ENCODE measurements at regions of chr11 and their contacts with region 1.

Region 1: DNA sequence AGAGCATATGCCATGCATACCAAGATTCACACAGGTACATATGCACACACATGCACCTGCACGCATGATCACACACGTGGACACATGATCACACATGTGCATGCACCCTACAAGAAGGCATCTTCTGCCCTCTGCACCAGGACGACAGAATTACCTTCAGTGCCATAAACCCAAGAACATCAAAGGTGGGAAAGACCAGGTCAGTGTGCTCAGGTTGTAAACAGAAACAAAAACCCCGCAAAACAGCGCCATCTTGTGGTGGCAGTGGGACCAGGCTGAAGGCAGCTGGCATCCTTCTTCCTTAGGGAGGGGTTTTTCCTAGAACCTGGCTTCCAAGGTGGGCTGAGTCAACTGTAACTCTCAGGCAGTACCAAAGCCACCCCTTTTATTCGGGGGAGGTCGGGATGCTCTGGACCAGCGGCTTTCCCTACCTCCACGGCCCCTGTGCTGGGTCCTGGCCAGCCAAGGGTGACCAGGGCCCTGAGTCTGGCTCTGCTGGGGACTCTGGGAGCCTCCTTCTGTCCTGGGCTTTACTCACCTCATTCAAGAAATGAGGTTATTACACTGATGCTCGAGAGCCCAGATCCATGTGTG is 69.4 kb upstream of the FGF3 start:
- DNase-seq: peak; percentile 61
- ATAC-seq: peak; percentile 59 to 70
- H3K4me3 ChIP-seq: no peak overlapping the region
- H3K27ac ChIP-seq: no peak overlapping the region
- H3K4me1 ChIP-seq: no peaks in the 10 kb centered on the region
- H3K27me3 ChIP-seq: peaks cover 51% of the 10 kb centered on the region
- CTCF ChIP-seq: peak; percentile 90

Region 2: GRCh38 chr11:69683764-69684333 is 204.7 kb before region 1 on chr11:
- intact Hi-C with region 1: loop called (anchors 10 kb)
- DNase-seq: no peak
- ATAC-seq: peak; percentile 35 to 57
- H3K4me3 ChIP-seq: no peak overlapping the region
- H3K27ac ChIP-seq: no peak overlapping the region
- H3K4me1 ChIP-seq: peaks cover 6% of the 10 kb centered on the region
- H3K27me3 ChIP-seq: peaks cover 20% of the 10 kb centered on the region
- CTCF ChIP-seq: peak; percentile 38

Region 3: DNA sequence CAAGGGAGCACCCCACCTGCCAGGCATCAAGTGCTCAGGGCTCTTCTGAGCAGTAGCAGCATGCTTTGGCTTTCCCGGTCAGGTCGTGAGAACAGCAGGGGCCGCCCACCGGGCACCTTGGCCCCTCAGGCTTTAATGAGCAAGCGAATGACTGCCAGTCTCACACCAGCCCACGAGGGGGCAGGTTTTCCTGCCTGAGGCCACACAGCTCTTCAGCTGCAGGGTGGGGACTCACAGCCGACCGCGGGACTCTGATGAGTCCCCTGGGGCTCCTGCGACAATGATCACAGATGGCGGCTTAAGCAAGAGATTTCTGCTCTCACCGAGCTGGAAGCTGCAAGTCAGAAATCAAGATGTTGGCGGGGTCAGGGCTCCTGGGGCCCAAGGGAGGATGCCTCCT is 170.4 kb before region 1 on chr11:
- intact Hi-C with region 1: no loop called
- DNase-seq: no peak
- ATAC-seq: no peak
- H3K4me3 ChIP-seq: no peak overlapping the region
- H3K27ac ChIP-seq: no peak overlapping the region
- H3K4me1 ChIP-seq: no peaks in the 10 kb centered on the region
- H3K27me3 ChIP-seq: peaks cover 56% of the 10 kb centered on the region
- CTCF ChIP-seq: no peak

Region 4: DNA sequence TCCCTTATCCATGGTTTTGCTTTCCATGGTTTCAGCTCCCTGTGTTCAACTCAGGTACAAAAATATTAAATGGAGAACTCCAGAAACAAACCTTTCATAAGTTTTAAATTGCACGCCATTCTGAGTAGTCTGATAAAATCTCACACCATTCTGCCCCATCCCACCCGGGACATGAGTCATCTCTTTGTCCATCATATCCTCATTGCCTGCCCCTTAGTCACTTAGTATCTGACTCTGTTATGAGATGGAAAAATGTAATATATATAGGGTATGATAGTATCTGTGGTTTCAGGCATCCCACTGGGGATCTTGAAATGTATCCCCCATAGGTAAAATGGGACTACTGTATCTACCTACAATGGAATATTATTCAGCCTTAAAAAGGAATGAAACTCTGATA is 33.9 kb before region 1 on chr11:
- intact Hi-C with region 1: no loop called
- DNase-seq: no peak
- ATAC-seq: no peak
- H3K4me3 ChIP-seq: no peak overlapping the region
- H3K27ac ChIP-seq: no peak overlapping the region
- H3K4me1 ChIP-seq: no peaks in the 10 kb centered on the region
- H3K27me3 ChIP-seq: peaks cover 19% of the 10 kb centered on the region
- CTCF ChIP-seq: no peak